Activated B cell treated with CpG ODN at 0.5 μM for 24 hours (primary cell): ENCODE measurements at regions of chr6 and their contacts with region 1.

Region 1: GRCh38 chr6:16712931-16713484 is 48.3 kb downstream of the ATXN1 start:
- DNase-seq: no peak
- ATAC-seq: peak; percentile 54
- H3K4me3 Mint-ChIP-seq: peak overlapping the region; percentile 75
- H3K27ac Mint-ChIP-seq: peak overlapping the region; percentile 94
- H3K4me1 Mint-ChIP-seq: peaks cover 28% of the 10 kb centered on the region
- H3K27me3 Mint-ChIP-seq: no peaks in the 10 kb centered on the region
- CTCF ChIP-seq: no peak

Region 2: GRCh38 chr6:16128759-16129622 is 584.0 kb before region 1 on chr6 and contains the start of gene MYLIP:
- CTCF ChIA-PET with region 1: no interaction called
- POLR2A ChIA-PET with region 1: no interaction called
- intact Hi-C with region 1: no loop called
- DNase-seq: peak; percentile 96
- ATAC-seq: peak; percentile 88
- H3K4me3 Mint-ChIP-seq: peak within 1 kb of the TSS; percentile 92
- H3K27ac Mint-ChIP-seq: peak within 1 kb of the TSS; percentile 83
- H3K4me1 Mint-ChIP-seq: peaks cover 59% of the 10 kb centered on the region
- H3K27me3 Mint-ChIP-seq: no peaks in the 10 kb centered on the region
- CTCF ChIP-seq: no peak
- total RNA-seq, gene MYLIP: 9.7 and 10.3 TPM in 2 replicates

Region 3: DNA sequence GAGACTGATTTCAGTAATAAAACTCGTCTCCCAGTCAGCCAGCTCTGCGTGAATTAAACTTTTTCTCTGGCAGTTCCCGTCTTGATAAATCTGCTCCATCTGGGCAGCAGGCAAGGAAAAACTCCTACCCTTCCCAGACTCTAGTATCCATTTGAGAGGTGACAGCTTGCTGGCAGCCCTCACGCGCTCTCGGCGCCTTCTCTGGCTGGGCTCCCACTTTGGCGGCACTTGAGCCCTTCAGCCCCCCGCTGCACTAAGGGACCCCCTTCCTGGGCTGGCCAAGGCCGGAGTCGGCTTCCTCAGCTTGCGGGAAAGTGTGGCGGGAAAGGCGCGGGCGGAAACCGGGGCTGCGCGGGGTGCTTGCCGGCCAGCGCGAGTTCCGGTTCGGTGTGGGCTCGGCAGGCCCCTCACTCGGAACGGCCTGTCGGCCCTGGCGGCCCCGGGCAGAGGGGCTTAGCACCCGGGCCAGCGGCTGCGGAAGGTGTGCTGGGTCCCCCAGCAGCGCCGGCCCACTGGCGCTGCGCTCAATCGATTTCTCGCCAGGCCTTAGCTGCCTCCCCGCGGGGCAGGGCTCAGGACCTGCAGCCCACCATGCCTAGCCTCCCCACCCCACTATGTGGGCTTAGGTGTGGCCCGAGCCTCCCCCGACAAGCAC is 496.4 kb before region 1 on chr6:
- CTCF ChIA-PET with region 1: no interaction called
- POLR2A ChIA-PET with region 1: no interaction called
- intact Hi-C with region 1: no loop called
- DNase-seq: no peak
- ATAC-seq: no peak
- H3K4me3 Mint-ChIP-seq: no peak overlapping the region
- H3K27ac Mint-ChIP-seq: no peak overlapping the region
- H3K4me1 Mint-ChIP-seq: peaks cover 3% of the 10 kb centered on the region
- H3K27me3 Mint-ChIP-seq: peaks cover 32% of the 10 kb centered on the region
- CTCF ChIP-seq: no peak

Region 4: DNA sequence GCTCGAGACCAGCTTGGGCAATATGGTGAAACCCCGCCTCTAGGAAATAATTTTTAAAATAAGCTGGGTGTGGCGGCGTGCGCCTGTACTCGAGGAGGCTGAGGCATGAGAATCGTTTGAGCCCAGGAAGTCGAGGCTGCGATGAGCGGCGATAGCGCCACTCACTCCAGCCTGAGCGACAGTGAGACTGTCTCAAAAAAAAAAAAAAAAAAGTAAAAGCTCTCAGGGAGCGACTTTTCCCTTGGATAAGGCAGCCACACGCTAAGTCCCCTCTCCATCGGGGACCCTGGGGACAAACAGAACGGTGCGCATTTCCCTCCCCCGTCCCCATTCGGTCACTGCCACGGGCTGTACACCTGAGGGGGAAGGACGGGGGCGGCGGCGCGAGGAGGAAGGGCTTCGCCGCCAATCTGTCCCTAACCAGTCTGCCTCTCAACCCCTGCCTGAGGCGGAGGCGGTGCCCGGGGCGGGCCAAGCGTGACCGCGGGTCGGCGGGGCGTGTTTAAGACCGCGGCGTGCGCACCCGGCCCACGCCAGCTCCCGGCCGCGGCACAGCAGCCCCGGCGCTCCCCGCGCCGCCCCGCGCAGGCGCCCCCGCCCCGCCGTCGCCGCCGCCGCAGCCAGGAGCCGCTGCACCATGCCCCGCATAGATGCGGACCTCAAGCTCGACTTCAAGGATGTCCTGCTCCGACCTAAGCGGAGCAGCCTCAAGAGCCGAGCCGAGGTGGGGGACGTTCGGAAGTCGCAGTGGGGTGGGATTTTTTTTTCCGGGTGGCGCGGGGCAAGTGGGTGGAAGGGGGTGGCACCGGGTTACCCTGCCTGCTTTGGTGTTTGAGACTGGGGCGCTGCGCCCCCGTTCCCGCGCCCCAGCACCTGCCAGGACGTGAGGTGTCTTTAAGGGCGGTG is 474.7 kb before region 1 on chr6 and contains the start of gene GMPR:
- CTCF ChIA-PET with region 1: no interaction called
- POLR2A ChIA-PET with region 1: no interaction called
- intact Hi-C with region 1: loop called (anchors 5 kb)
- DNase-seq: peak; percentile 57
- ATAC-seq: peak; percentile 87
- H3K4me3 Mint-ChIP-seq: peak within 1 kb of the TSS; percentile 91
- H3K27ac Mint-ChIP-seq: peak within 1 kb of the TSS; percentile 57
- H3K4me1 Mint-ChIP-seq: peaks cover 34% of the 10 kb centered on the region
- H3K27me3 Mint-ChIP-seq: peaks cover 24% of the 10 kb centered on the region
- CTCF ChIP-seq: no peak
- total RNA-seq, gene GMPR: 0.47 and 0.98 TPM in 2 replicates

Region 5: DNA sequence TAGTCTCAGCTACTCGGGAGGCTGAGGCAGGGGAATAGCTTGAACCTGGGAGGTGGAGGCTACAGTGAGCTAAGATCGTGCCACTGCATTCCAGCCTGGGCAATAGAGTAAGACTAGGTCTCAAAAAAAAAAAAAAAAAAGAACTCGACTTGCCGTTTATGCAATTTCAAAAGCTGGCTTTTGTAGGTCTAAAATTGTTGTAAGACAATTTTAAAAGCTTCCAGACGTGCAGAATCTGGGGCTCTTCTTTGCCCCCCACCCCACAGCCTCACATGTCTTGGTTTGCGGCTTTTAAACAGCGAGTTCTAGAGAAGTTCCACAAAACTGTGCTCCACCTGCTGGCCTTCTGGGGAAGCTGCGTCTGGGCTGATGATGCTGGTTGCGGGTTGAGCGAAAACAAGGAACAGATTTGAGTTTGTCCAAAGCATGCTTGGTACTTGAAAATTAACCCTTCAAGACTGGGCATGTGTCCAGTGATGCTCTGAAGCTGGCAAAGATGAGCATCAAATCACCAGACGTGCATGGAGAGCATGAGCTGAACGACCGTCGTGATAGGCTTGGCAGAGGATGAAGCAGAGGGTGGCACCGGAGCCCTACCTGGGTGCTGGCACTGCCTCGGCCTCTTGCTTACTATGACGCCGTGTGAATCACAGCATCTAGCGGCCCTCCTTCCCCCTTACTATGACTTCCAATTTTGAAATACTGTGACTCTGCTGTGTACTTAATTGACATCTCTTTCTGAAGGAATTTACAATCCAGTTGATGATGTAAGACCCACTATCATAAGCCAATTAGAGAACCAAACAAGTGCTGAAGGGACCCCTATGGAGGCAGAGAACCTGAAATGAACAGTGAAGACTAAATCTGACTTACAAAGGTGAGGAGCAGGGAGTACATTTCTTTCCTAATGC is 303.2 kb before region 1 on chr6:
- CTCF ChIA-PET with region 1: no interaction called
- POLR2A ChIA-PET with region 1: interaction called, 13 read pairs
- intact Hi-C with region 1: no loop called
- DNase-seq: peak; percentile 32
- ATAC-seq: peak; percentile 60
- H3K4me3 Mint-ChIP-seq: peak overlapping the region; percentile 63
- H3K27ac Mint-ChIP-seq: peak overlapping the region; percentile 37
- H3K4me1 Mint-ChIP-seq: peaks cover 66% of the 10 kb centered on the region
- H3K27me3 Mint-ChIP-seq: no peaks in the 10 kb centered on the region
- CTCF ChIP-seq: no peak

Region 6: DNA sequence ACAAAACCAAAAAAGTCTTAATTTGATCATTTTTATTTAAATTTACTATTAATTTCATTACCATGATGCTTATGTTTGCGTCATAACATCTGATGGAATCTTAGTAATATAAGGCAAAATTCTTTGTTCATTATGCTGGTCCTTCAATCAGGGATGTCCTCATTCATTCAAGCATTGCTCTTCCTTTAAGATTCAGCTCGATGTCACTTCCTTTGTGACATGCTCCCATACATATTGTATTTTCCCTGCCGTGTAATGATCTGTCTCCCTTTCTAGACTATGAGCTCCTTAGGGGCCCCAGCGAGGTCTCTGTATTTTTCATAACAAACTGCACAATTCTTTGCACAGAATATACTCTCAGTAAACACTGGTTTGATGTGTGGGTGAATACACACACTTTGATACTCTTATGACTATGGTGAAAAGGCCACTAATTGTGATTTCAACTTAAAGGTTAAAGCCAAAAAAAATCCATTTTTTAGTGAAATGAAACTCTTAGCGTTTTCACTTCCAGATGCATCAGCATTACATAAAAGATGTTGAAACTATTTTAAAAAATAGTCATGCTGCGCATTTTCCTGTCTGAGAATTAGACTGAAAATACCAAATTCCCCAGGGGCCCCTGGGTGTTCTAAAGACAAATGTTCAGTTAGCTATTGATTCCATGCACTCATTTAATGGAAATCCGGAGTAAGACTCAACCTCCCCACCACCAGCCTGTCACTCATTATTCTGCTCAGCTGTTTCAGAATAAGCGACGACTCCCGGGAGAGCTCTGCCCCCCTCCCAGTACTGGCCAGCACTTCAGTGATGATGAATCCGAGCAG is 121.4 kb before region 1 on chr6:
- CTCF ChIA-PET with region 1: no interaction called
- POLR2A ChIA-PET with region 1: interaction called, 5 read pairs
- intact Hi-C with region 1: loop called (anchors 1 kb)
- DNase-seq: no peak
- ATAC-seq: peak; percentile 75
- H3K4me3 Mint-ChIP-seq: peak overlapping the region; percentile 72
- H3K27ac Mint-ChIP-seq: peak overlapping the region; percentile 83
- H3K4me1 Mint-ChIP-seq: peaks cover 52% of the 10 kb centered on the region
- H3K27me3 Mint-ChIP-seq: no peaks in the 10 kb centered on the region
- CTCF ChIP-seq: no peak

Region 7: DNA sequence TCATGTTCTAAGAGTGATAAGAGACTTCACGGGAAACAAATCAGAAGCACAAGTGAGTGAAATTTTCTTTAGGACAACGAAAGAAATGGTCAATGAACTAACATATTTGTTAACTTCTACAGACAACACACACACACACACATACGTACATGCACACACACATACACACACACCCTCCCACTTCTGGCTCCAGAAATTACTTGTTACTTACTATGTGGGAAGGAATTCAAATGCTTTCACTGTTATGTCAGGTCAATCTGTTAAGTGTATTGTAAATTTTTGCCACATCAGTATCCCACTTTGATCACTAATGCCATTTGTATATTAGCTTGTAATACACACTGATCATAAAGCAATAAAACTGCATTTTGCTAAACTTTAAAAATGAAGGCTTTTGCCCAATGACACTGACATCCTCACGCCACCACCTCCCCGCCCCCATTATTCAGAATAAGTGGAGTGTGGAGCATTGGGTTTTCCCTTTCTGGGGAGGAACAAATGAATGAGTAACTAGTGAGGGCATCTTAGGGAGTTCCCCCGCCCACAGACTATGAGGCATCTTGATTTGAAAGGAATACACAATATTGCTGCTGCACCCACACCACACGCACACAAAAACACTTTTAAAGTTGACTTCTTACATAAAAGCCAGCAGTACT is 28.0 kb before region 1 on chr6:
- CTCF ChIA-PET with region 1: no interaction called
- POLR2A ChIA-PET with region 1: interaction called, 10 read pairs
- intact Hi-C with region 1: loop called (anchors 1 kb)
- DNase-seq: peak; percentile 45
- ATAC-seq: peak; percentile 71
- H3K4me3 Mint-ChIP-seq: peak overlapping the region; percentile 46
- H3K27ac Mint-ChIP-seq: peak overlapping the region; percentile 90
- H3K4me1 Mint-ChIP-seq: peaks cover 61% of the 10 kb centered on the region
- H3K27me3 Mint-ChIP-seq: no peaks in the 10 kb centered on the region
- CTCF ChIP-seq: no peak

Region 8: DNA sequence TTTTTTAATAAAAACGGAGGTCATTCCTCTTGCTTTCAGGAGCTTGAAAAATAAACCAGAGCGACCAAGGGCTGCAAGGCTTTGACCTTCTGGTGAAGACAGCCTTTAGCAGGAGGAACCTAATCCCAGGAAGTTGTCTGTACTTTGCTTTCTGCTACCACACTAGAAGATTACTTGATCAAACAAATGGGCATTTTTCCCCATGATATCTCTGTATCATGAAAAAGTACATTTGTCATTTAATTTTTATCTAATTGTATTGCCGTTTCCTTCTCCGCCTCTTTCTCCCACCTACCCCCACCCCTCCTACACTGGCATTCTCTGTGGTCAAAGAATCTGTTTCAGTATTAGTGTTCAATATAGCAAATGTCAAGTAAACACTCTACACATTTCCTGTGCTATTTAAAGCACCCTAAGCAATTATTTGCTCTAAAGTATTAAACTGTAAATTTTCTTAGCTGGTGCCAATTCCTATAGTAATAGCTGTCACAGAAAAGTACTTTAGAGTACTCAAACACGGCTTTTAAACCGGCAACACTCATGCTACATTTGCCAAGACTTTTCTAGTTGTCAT is 18.6 kb after region 1 on chr6:
- CTCF ChIA-PET with region 1: interaction called, 4 read pairs
- POLR2A ChIA-PET with region 1: interaction called, 6 read pairs
- intact Hi-C with region 1: loop called (anchors 2 kb)
- DNase-seq: no peak
- ATAC-seq: peak; percentile 62
- H3K4me3 Mint-ChIP-seq: peak overlapping the region; percentile 52
- H3K27ac Mint-ChIP-seq: no peak overlapping the region
- H3K4me1 Mint-ChIP-seq: peaks cover 21% of the 10 kb centered on the region
- H3K27me3 Mint-ChIP-seq: no peaks in the 10 kb centered on the region
- CTCF ChIP-seq: no peak

Region 9: DNA sequence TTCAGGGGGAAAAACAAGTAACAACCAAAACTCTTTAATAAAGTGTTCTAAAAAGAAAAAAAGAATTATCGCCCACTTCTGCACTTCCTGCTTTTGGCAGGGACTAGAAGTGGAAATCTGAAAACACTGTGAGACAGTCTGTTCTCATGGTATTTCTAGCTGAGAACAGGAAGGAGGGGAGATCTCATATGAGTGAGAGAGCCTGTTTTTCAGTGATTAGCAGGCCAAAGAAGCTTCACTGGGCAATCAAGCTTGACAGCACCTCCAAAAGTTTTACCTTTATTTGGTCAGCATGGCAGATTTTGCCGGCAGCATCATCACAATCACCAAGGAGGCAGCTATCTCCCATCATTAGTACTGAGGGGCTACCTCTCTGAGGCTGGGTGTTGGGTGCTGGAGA is 127.7 kb after region 1 on chr6:
- CTCF ChIA-PET with region 1: no interaction called
- POLR2A ChIA-PET with region 1: no interaction called
- intact Hi-C with region 1: no loop called
- DNase-seq: no peak
- ATAC-seq: no peak
- H3K4me3 Mint-ChIP-seq: no peak overlapping the region
- H3K27ac Mint-ChIP-seq: no peak overlapping the region
- H3K4me1 Mint-ChIP-seq: peaks cover 6% of the 10 kb centered on the region
- H3K27me3 Mint-ChIP-seq: peaks cover 3% of the 10 kb centered on the region
- CTCF ChIP-seq: no peak